GM23248 (cell line): ENCODE measurements at regions of chr11 and their contacts with region 1.

Region 1: DNA sequence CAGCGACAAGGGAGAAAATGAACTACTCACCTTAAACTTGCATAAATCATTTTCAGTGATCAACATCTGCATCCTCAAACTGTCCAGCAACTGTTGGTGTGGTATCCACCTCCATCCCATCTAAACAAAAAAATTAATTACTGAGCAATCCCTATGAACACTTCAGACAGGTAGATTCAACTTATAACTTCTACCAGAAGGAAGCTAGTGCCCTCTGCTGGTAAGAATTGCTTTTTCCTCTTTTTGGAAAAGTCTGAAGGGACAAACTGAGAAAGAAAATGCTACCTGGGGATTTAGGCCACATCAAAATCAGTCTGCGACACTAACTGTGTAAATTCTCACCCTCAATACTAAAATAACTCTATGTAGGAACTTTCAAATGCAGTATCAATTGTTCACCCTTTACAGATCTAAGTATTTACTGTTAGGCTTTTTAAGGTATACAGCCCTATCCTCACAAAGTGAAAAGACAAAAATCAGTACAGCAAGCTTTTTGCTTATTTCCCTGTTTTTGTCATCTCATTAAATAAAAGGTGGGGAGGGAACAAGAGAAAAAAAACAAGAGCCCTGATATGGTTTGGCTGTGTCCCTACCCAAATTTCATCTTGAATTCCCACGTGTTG is 17.9 kb downstream of the CLNS1A start:
- DNase-seq: peak; percentile 58
- H3K4me3 ChIP-seq: no peak overlapping the region
- H3K27ac ChIP-seq: no peak overlapping the region
- H3K4me1 ChIP-seq: peaks cover 13% of the 10 kb centered on the region
- H3K27me3 ChIP-seq: no peaks in the 10 kb centered on the region

Region 2: DNA sequence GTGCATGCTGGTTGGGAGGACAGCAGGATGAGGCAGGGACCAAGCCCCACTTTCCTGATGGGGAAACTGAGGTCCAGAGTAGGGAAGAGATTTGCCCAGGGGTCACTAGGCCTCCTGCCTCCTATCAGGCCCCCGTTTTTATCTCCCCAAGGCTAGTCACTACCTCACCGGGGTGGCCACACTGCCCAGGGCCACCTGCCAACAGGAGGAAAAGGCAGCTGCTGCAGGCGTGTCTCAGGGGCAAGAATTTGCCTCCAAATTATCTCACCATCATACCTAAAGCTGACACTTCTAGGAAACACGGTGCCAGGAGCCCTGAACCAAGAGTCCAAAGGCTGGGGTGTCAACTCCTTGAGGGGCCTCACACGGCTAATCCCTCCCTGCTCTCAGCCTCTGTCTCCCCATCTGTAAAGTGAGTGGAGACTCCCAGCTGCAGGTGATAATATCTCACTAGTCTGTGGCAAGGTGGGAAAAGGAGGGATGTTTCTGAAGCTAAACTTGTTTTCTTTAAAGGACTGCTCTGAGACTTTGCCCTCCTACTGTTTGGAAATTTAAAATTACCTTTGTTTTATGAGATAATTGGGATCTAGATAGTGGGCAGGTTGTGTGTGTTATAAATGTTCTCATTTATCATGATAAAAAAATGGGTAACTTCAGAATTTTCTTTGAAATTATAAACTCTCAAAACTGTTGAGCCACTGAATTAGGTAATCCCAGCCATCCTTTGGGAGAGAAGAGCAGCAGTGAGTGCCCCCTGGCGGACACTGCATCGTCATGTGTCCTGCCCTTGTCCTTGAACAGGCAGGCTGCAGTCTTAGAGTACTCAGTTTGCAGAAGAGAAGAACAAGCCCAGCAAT is 431.7 kb before region 1 on chr11:
- in situ Hi-C with region 1: loop called (anchors 10 kb)
- DNase-seq: peak; percentile 87
- H3K4me3 ChIP-seq: no peak overlapping the region
- H3K27ac ChIP-seq: no peak overlapping the region
- H3K4me1 ChIP-seq: no peaks in the 10 kb centered on the region
- H3K27me3 ChIP-seq: no peaks in the 10 kb centered on the region

Region 3: GRCh38 chr11:77250881-77251640 is 368.6 kb before region 1 on chr11:
- in situ Hi-C with region 1: no loop called
- DNase-seq: peak; percentile 64
- H3K4me3 ChIP-seq: 0 out of 2 replicates have a peak overlapping the region, but pooled peaks have one; percentile 20
- H3K27ac ChIP-seq: no peak overlapping the region
- H3K4me1 ChIP-seq: peaks cover 8% of the 10 kb centered on the region
- H3K27me3 ChIP-seq: no peaks in the 10 kb centered on the region

Region 4: GRCh38 chr11:77677138-77677537 is 57.5 kb after region 1 on chr11:
- in situ Hi-C with region 1: no loop called
- DNase-seq: peak; percentile 53
- H3K4me3 ChIP-seq: no peak overlapping the region
- H3K27ac ChIP-seq: no peak overlapping the region
- H3K4me1 ChIP-seq: peaks cover 22% of the 10 kb centered on the region
- H3K27me3 ChIP-seq: no peaks in the 10 kb centered on the region

Region 5: GRCh38 chr11:77734890-77735289 is 115.2 kb after region 1 on chr11:
- in situ Hi-C with region 1: no loop called
- DNase-seq: no peak
- H3K4me3 ChIP-seq: no peak overlapping the region
- H3K27ac ChIP-seq: no peak overlapping the region
- H3K4me1 ChIP-seq: no peaks in the 10 kb centered on the region
- H3K27me3 ChIP-seq: no peaks in the 10 kb centered on the region